Activated CD4-positive, alpha-beta T cell treated with anti-CD3 and anti-CD28 coated beads, Interleukin-2, amount 10 ng/mL, durations not matched to agents 24 days and 14 days (primary cell): ENCODE measurements at regions of chr3 and their contacts with region 1.

Region 1: GRCh38 chr3:15205934-15206661 is at the start of gene CAPN7:
- DNase-seq: peak; percentile 99
- H3K4me3 Mint-ChIP-seq: peak within 1 kb of the TSS; percentile 92
- H3K27ac Mint-ChIP-seq: peak within 1 kb of the TSS; percentile 93
- H3K4me1 Mint-ChIP-seq: peaks cover 18% of the 10 kb centered on the region
- H3K27me3 Mint-ChIP-seq: no peaks in the 10 kb centered on the region
- total RNA-seq, gene CAPN7: 25.4 and 29.9 TPM in 2 replicates

Region 2: GRCh38 chr3:15268033-15268631 is 62.0 kb after region 1 on chr3:
- intact Hi-C with region 1: loop called (anchors 2 kb)
- DNase-seq: peak; percentile 95
- H3K4me3 Mint-ChIP-seq: no peak overlapping the region
- H3K27ac Mint-ChIP-seq: no peak overlapping the region
- H3K4me1 Mint-ChIP-seq: peaks cover 45% of the 10 kb centered on the region
- H3K27me3 Mint-ChIP-seq: no peaks in the 10 kb centered on the region

Region 3: DNA sequence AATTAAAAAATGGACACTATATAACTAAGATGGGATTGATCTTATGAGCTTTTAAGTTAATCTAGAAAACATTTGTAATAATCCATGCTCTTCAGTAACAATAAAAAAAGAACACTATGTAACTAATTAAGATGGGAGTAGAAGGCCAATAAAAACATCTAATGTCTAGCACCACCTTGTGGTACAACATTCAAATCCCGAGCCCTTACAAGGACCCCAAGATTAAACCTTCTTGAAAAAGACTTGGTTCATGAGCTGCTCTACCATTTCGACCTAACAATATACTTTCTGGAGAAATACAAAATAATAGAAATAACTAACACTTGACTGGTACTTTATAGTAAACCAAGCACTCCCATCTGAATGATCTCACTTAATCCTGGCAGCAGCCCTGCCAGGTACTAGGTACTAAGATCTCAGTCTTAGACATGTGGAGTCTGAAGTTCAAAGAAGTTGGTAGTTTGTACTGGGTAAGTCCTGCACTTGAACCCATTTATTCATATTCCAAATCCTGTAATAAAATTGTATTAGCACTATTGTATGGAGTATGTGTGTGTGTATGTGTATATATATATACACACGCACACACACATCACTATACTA is 199.5 kb after region 1 on chr3:
- intact Hi-C with region 1: loop called (anchors 1 kb)
- DNase-seq: peak; percentile 77
- H3K4me3 Mint-ChIP-seq: no peak overlapping the region
- H3K27ac Mint-ChIP-seq: no peak overlapping the region
- H3K4me1 Mint-ChIP-seq: peaks cover 6% of the 10 kb centered on the region
- H3K27me3 Mint-ChIP-seq: no peaks in the 10 kb centered on the region

Region 4: DNA sequence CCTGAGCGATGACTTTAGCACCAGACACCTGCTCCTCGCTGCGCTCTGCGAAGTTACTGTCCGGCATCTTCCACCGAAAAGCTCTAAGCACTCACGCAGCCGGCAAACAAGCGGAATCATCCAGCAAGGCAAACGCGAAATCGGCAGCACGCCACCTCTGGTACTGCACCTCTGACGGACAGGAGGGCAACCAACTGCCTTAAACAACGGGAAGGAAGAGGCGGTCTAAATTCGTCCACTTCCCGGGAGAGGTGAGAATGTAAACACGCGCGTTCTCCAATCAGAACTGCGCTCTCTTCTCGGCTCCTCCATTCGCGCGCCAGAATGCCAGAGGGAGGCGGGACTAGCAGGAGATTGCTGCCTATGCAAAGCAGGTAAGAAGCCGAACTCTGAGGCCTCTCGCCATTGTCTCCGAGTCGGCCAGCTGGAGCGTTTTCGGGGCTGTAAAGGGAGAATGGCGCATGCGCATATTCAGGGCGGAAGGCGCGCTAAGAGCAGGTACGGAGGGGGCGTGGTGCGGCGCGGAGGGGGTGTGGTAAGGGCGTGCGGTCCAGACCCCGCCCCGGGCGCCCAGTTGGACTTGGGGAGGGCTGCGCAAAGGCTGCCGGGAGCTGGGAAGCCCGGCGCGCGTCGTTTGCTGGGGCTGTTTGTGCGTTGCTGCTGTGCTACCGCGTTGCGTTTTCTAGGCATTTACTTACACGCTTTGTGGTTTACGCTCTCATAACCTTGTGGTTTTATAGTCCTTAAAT is 395.5 kb after region 1 on chr3 and contains the starts of genes BTD and HACL1:
- intact Hi-C with region 1: loop called (anchors 1 kb)
- DNase-seq: peak; percentile 99
- H3K4me3 Mint-ChIP-seq: peak within 1 kb of the TSS; percentile 98
- H3K27ac Mint-ChIP-seq: peak within 1 kb of the TSS; percentile 98
- H3K4me1 Mint-ChIP-seq: peaks cover 30% of the 10 kb centered on the region
- H3K27me3 Mint-ChIP-seq: peaks cover 2% of the 10 kb centered on the region
- total RNA-seq, gene BTD: 2.0 and 2.1 TPM in 2 replicates
- total RNA-seq, gene HACL1: 19.3 and 21.4 TPM in 2 replicates

Region 5: GRCh38 chr3:15804553-15805095 is 598.5 kb after region 1 on chr3:
- intact Hi-C with region 1: no loop called
- DNase-seq: no peak
- H3K4me3 Mint-ChIP-seq: peak overlapping the region; percentile 1
- H3K27ac Mint-ChIP-seq: peak overlapping the region; percentile 75
- H3K4me1 Mint-ChIP-seq: peaks cover 66% of the 10 kb centered on the region
- H3K27me3 Mint-ChIP-seq: no peaks in the 10 kb centered on the region

Region 6: DNA sequence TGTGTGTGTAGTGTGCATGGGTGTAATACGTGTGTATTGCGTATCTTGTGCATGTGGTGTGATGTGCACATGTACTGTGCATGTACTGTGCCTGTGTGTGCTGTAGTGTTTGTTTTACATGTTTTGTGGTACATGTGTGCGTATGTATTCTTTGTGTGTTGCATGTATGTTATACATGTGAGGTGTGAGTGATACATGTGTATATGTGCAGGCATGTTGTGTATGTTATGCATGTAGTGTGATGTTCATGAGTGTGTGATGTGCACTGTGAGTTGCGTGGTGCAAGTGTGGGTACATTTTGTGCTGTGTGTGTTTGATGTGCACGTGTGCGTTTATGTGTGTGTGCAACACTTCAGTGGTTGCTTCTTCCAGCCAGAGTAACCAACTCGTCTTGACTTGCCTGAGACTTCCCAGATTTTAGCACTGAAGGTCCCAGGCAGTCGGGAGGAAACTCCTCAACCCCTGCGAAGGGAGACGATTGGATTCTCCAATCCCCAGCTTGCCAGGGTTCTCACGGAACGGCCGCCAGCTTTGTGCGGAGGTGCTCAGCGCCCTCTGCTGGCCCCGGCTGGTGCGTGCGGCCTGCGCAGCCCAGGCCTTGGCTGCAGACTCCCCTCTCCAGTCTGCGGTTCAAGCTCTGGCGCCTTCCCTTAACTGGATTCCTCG is 972.0 kb after region 1 on chr3:
- intact Hi-C with region 1: loop called (anchors 5 kb)
- DNase-seq: peak; percentile 90
- H3K4me3 Mint-ChIP-seq: no peak overlapping the region
- H3K27ac Mint-ChIP-seq: no peak overlapping the region
- H3K4me1 Mint-ChIP-seq: peaks cover 3% of the 10 kb centered on the region
- H3K27me3 Mint-ChIP-seq: peaks cover 26% of the 10 kb centered on the region